CD8-positive, alpha-beta T cell (primary cell): ENCODE measurements at regions of chr4 and their contacts with region 1.

Region 1: GRCh38 chr4:183074296-183074990 is 24.6 kb upstream of the WWC2 start:
- DNase-seq: no peak
- ATAC-seq: no peak
- H3K4me3 ChIP-seq: no peak overlapping the region
- H3K4me3 Mint-ChIP-seq: no peak overlapping the region
- H3K27ac ChIP-seq: no peak overlapping the region
- H3K27ac Mint-ChIP-seq: no peak overlapping the region
- H3K4me1 ChIP-seq: no peaks in the 10 kb centered on the region
- H3K4me1 Mint-ChIP-seq: no peaks in the 10 kb centered on the region
- H3K27me3 ChIP-seq: no peaks in the 10 kb centered on the region
- H3K27me3 Mint-ChIP-seq: peaks cover 7% of the 10 kb centered on the region
- CTCF ChIP-seq: no peak

Region 2: DNA sequence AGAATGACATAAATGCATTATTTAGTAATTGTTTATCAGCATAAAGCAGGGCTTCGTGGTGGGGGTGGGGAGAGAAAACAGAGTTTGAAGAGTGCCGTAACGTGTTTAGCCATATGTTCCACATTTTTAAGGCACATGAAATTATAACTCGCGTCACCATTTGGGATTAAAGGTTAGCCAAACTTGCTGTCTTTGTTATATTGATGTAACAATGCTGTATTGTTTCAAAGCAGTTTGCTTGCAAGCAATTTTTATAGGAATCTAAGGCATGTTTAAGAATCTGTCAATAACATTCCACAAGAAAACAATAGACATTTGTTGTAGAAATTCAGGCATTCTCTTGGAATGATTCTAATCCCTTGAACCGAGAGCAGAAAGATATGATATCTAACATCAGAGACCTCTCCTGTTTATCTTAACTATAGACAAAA is 167.3 kb after region 1 on chr4:
- CTCF ChIA-PET with region 1: interaction called, 10 read pairs
- POLR2A ChIA-PET with region 1: no interaction called
- intact Hi-C with region 1: no loop called
- DNase-seq: no peak
- ATAC-seq: no peak
- H3K4me3 ChIP-seq: no peak overlapping the region
- H3K4me3 Mint-ChIP-seq: no peak overlapping the region
- H3K27ac ChIP-seq: no peak overlapping the region
- H3K27ac Mint-ChIP-seq: no peak overlapping the region
- H3K4me1 ChIP-seq: no peaks in the 10 kb centered on the region
- H3K4me1 Mint-ChIP-seq: no peaks in the 10 kb centered on the region
- H3K27me3 ChIP-seq: no peaks in the 10 kb centered on the region
- H3K27me3 Mint-ChIP-seq: peaks cover 5% of the 10 kb centered on the region
- CTCF ChIP-seq: no peak

Region 3: GRCh38 chr4:183256756-183257385 is 182.4 kb after region 1 on chr4:
- CTCF ChIA-PET with region 1: interaction called, 35 read pairs
- POLR2A ChIA-PET with region 1: no interaction called
- intact Hi-C with region 1: loop called (anchors 1 kb)
- DNase-seq: peak in 8 of 9 experiments; percentile 8 to 62 (median 38)
- ATAC-seq: peak; percentile 63
- H3K4me3 ChIP-seq: no peak overlapping the region
- H3K4me3 Mint-ChIP-seq: no peak overlapping the region
- H3K27ac ChIP-seq: no peak overlapping the region
- H3K27ac Mint-ChIP-seq: no peak overlapping the region
- H3K4me1 ChIP-seq: no peaks in the 10 kb centered on the region
- H3K4me1 Mint-ChIP-seq: no peaks in the 10 kb centered on the region
- H3K27me3 ChIP-seq: no peaks in the 10 kb centered on the region
- H3K27me3 Mint-ChIP-seq: peaks cover 4% of the 10 kb centered on the region
- CTCF ChIP-seq: peak; percentile 57

Region 4: GRCh38 chr4:183268556-183268955 is 194.1 kb after region 1 on chr4:
- CTCF ChIA-PET with region 1: interaction called, 14 read pairs
- POLR2A ChIA-PET with region 1: no interaction called
- intact Hi-C with region 1: no loop called
- DNase-seq: no peak
- ATAC-seq: no peak
- H3K4me3 ChIP-seq: no peak overlapping the region
- H3K4me3 Mint-ChIP-seq: no peak overlapping the region
- H3K27ac ChIP-seq: no peak overlapping the region
- H3K27ac Mint-ChIP-seq: no peak overlapping the region
- H3K4me1 ChIP-seq: no peaks in the 10 kb centered on the region
- H3K4me1 Mint-ChIP-seq: no peaks in the 10 kb centered on the region
- H3K27me3 ChIP-seq: no peaks in the 10 kb centered on the region
- H3K27me3 Mint-ChIP-seq: no peaks in the 10 kb centered on the region
- CTCF ChIP-seq: no peak